ENCODE measurements at regions of chr15 and their contacts with region 1.

Region 1: DNA sequence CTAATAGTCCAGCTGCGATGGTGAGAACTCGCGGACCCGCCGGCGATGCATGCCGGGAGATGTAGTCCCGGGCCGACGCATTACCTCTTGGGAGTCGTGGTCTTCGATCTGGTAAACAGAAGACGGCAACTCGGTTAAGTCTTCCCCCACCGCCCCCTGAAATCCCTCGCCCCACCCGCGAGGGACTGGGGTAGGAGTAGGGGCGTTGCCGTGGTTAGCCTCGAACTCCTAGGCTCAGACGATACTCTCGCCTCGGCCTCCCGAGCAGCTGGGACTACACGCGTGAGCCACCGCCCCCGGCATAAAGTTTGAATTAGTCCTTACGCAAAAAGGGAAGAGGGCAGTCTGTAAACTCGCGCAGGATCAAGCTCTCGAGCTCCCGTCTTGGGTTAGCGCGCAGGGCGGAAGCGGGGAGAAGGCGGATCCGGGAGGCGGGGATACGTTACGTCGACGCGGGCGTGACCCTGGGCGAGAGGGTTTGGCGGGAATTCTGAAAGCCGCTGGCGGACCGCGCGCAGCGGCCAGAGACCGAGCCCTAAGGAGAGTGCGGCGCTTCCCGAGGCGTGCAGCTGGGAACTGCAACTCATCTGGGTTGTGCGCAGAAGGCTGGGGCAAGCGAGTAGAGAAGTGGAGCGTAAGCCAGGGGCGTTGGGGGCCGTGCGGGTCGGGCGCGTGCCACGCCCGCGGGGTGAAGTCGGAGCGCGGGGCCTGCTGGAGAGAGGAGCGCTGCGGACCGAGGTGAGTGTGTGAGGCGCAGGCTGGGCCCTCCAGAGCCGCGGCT is at the start of gene RAD51:
- DNase-seq: peak; percentile 92 to 97
- ATAC-seq: peak; percentile 97 to 99 (median 98)
- H3K4me3 ChIP-seq: peak within 1 kb of the TSS; percentile 85
- H3K27ac ChIP-seq: peak within 1 kb of the TSS; percentile 98
- H3K4me1 ChIP-seq: peaks cover 15% of the 10 kb centered on the region
- H3K27me3 ChIP-seq: no peaks in the 10 kb centered on the region
- CTCF ChIP-seq: no peak
- total RNA-seq, gene RAD51: 0.41 to 1.5 (median 0.56) TPM

Region 2: DNA sequence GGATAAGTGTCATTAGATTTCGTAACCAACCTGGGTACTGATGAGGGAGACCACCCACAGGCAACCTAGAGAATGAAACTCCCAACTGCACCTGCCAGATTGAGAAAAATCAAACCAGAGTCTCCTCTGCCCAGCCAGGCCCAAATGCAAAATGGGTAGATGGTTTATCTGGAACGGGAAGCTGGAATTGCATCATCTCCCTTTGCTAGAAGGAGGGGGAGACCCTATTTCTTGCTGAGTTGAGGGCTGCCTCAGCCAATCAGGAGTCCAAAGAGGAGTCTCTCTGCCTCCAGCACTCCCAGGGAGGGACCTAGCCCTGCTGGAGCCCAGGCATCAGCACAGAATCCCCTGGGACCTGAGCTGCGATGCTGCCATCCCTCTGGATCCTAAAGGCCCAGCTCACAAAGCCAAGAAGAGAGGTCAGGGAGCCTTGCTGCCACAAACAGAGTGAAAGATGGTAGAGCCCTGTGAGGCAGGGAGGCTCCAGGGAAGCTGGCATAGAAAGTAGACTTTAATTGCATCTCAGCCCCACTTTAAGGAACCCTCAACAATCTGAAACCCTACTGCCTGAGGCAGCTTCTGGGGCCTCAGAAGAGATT is 52.1 kb after region 1 on chr15:
- intact Hi-C with region 1: loop called in 1 of 2 experiments (anchors 5 kb)
- DNase-seq: no peak
- ATAC-seq: no peak
- H3K4me3 ChIP-seq: no peak overlapping the region
- H3K27ac ChIP-seq: no peak overlapping the region
- H3K4me1 ChIP-seq: peaks cover 19% of the 10 kb centered on the region
- H3K27me3 ChIP-seq: no peaks in the 10 kb centered on the region
- CTCF ChIP-seq: no peak